PC-3 (cell line): ENCODE measurements at regions of chr6 and their contacts with region 1.

Region 1: GRCh38 chr6:131894735-131895424 is 56.3 kb downstream of the CCN2 start:
- DNase-seq: peak; percentile 66
- ATAC-seq: peak; percentile 95
- H3K4me3 ChIP-seq: peak overlapping the region; percentile 19; the same call in 1 of the 2 replicates
- H3K27ac ChIP-seq: no peak overlapping the region
- H3K4me1 ChIP-seq: peaks cover 13% of the 10 kb centered on the region
- H3K27me3 ChIP-seq: no peaks in the 10 kb centered on the region
- CTCF ChIP-seq: no peak

Region 2: DNA sequence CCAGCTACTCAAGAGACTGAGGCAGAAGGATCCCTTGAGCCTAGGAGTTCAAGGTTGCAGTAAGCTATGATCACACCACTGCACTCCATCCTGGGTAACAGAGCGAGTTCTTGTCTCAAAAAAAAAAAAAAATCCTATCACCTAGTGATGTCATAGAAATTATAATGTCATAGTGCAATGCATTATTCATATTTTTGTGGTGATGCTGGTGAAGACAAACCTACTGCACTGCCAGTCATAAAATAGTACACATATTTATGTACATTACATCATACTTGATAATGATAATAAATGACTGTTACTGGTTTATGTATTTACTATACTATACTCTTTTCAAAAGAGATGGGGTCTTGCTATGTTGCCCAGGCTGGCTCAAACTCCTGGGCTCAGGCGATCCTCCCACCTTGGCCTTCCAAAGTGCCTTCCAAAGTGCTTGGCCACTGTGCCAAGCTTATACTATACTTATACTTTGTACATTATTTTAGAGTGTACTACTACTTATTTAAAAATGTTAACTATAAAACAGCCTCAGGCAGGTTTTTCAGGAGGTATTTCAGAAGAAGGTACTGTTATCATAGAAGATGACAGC is 231.2 kb before region 1 on chr6:
- CTCF ChIA-PET with region 1: no interaction called
- POLR2A ChIA-PET with region 1: interaction called, 11 read pairs
- intact Hi-C with region 1: no loop called
- DNase-seq: no peak
- ATAC-seq: no peak
- H3K4me3 ChIP-seq: no peak overlapping the region
- H3K27ac ChIP-seq: no peak overlapping the region
- H3K4me1 ChIP-seq: peaks cover 11% of the 10 kb centered on the region
- H3K27me3 ChIP-seq: no peaks in the 10 kb centered on the region
- CTCF ChIP-seq: no peak

Region 3: DNA sequence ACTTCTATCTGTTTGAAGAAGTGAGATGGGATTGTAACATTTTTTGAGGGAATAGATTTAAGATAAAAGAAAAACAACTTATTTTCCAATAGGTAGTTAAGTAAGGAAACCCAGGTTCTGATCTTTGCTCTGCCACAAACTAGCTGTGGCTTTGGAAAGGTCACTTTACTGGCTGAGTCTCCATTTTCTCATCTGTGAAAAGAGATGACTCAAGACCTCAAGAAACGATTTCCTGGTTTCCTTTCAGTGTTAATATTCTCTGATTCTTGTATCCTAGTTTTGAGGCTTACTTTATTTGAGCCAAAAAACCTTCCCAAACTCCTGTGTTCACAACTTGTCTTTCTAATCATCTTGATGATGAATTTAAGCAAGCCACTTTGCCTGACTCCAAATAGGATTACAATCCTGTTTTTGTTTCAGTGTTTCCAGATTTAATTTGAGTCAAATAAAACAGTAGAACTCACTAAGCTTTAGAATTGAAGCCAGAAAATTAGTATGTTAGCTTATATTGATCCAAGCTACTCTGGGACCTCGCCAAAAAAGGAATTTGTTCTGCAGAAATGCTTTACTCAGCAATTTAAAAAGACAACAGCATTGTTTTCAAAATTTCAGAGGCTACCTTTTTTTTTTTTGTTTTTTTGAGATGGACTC is 36.0 kb before region 1 on chr6:
- CTCF ChIA-PET with region 1: no interaction called
- POLR2A ChIA-PET with region 1: no interaction called
- intact Hi-C with region 1: loop called (anchors 5 kb)
- DNase-seq: peak; percentile 64
- ATAC-seq: peak; percentile 58
- H3K4me3 ChIP-seq: no peak overlapping the region
- H3K27ac ChIP-seq: peak overlapping the region; percentile 84
- H3K4me1 ChIP-seq: peaks cover 34% of the 10 kb centered on the region
- H3K27me3 ChIP-seq: no peaks in the 10 kb centered on the region
- CTCF ChIP-seq: no peak

Region 4: DNA sequence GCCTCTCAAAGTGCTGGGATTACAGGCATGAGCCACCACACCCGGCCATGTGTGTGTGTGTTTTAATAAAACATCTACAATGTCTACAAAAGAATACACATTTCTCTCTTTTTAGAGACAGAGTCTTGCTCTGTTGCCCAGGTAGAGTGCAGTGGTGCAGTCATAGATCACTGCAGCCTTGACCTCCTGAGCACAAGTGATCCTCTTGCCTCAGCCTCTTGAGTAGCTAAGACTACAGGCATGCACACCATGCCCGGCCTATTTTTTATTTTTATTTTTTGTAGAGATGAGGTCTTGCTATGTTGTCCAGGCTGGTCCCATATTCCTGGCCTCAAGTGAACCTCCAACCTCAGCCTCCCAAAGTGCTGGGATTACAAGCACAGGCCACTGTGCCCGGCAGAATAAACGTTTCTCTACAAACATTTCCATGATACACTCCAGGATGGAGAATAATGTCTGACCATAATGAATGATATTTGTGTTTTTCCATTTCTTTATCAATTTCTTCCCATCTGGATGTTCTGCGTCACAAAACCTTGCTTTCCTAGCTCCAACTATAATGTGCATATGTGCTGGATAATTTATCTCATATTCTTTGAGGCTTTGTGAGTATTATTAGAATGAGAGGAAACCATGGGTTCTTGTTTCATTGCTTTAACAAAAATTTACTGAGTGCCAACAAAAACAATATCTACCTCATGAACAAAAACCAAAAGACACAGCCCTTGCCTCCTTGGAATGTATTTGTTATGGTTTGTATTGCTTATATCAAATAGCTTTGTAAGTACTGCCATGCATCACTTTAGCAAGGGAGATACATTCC is 84.8 kb after region 1 on chr6:
- CTCF ChIA-PET with region 1: no interaction called
- POLR2A ChIA-PET with region 1: no interaction called
- intact Hi-C with region 1: no loop called
- DNase-seq: peak; percentile 10
- ATAC-seq: no peak
- H3K4me3 ChIP-seq: no peak overlapping the region
- H3K27ac ChIP-seq: no peak overlapping the region
- H3K4me1 ChIP-seq: peaks cover 29% of the 10 kb centered on the region
- H3K27me3 ChIP-seq: no peaks in the 10 kb centered on the region
- CTCF ChIP-seq: no peak

Region 5: DNA sequence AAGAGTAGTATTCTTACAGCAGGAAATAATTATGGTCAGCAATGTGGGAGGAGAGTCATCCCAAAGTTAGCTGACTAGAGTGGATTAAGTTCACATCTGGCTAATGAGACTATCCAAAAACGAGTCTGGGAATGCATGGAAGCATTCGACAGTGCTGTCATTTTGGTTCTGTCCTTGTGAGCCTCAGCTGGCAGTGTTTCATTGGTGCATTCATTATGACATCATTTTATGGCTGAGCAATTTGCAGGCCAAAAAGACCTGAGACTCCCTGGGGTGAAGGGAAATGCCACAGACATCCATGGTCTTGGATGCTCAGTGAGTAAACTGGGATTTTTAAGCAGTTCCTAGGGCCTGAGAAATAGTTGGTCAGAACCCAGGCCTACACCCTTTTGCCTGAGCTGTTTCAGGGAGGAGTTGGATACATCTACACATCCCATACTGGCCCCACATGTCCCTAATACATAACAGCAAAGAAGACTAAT is 252.7 kb after region 1 on chr6:
- CTCF ChIA-PET with region 1: no interaction called
- POLR2A ChIA-PET with region 1: no interaction called
- intact Hi-C with region 1: no loop called
- DNase-seq: no peak
- ATAC-seq: no peak
- H3K4me3 ChIP-seq: no peak overlapping the region
- H3K27ac ChIP-seq: no peak overlapping the region
- H3K4me1 ChIP-seq: no peaks in the 10 kb centered on the region
- H3K27me3 ChIP-seq: no peaks in the 10 kb centered on the region
- CTCF ChIP-seq: no peak